ENCODE measurements at regions of chr6 and their contacts with region 1.

Region 1: DNA sequence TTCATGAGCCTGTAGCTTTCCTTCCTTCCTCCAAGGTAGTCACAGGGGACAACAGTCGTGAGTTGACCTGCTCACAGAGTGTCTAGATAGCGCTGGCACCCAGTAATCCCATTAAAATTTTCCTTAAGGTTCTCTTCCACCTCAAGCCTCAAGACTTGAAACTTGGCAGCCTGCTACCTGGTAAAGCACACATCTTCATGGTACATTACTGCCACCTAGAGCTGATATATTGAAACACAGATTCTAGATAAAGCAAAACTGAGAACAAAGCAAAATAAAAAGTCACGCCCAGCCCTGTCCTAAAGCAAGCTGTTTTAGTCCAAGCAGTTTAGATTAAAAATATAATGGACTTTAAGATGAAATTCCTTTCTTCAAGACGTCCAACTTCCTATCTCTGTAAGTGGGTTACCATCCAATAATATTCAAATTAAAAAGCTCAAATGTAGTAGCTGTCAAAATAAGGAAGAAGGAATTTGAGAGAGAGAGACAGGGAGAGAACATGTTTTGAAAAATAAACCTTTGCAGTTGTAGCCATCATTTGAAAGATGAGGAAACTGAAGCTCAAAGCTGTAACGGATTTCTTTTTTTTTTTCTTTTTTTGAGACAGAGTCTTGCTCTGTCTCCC is 50.7 kb upstream of the CD83 start:
- DNase-seq: no peak
- H3K4me3 Mint-ChIP-seq: no peak overlapping the region
- H3K27ac Mint-ChIP-seq: no peak overlapping the region
- H3K4me1 Mint-ChIP-seq: peaks cover 8% of the 10 kb centered on the region
- H3K27me3 Mint-ChIP-seq: peaks cover 21% of the 10 kb centered on the region

Region 2: GRCh38 chr6:13873285-13874190 is 193.4 kb before region 1 on chr6:
- CTCF ChIA-PET with region 1: interaction called, 20 read pairs
- DNase-seq: peak; percentile 78
- H3K4me3 Mint-ChIP-seq: peak overlapping the region; percentile 78
- H3K27ac Mint-ChIP-seq: peak overlapping the region; percentile 12
- H3K4me1 Mint-ChIP-seq: peaks cover 16% of the 10 kb centered on the region
- H3K27me3 Mint-ChIP-seq: peaks cover 31% of the 10 kb centered on the region

Region 3: DNA sequence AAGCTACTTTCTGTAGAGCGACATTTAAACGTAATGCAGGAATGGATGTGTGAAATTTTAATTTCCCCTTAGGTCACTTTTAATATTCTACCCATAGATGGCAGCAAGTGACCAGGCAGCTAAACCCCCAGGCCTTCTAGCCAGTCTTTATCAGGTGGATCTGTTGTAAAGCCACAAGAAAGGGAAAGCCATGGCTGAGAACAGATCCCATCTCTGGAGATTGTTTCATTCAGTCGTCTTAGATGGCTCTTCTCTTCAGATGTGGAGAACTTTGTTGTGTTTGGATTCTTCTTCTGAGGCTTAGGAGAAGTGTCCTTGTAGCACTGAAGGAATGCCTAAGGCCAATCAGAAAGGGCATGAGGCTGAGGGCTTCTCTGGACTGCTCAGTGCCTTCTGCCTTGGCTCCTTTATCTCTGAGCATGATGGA is 157.9 kb before region 1 on chr6:
- CTCF ChIA-PET with region 1: interaction called, 13 read pairs
- DNase-seq: peak; percentile 55
- H3K4me3 Mint-ChIP-seq: no peak overlapping the region
- H3K27ac Mint-ChIP-seq: no peak overlapping the region
- H3K4me1 Mint-ChIP-seq: peaks cover 2% of the 10 kb centered on the region
- H3K27me3 Mint-ChIP-seq: peaks cover 17% of the 10 kb centered on the region

Region 4: GRCh38 chr6:14046476-14047068 is 20.3 kb before region 1 on chr6:
- CTCF ChIA-PET with region 1: interaction called, 75 read pairs
- DNase-seq: peak; percentile 58
- H3K4me3 Mint-ChIP-seq: no peak overlapping the region
- H3K27ac Mint-ChIP-seq: no peak overlapping the region
- H3K4me1 Mint-ChIP-seq: no peaks in the 10 kb centered on the region
- H3K27me3 Mint-ChIP-seq: peaks cover 30% of the 10 kb centered on the region

Region 5: GRCh38 chr6:14144678-14145113 is 77.8 kb after region 1 on chr6:
- CTCF ChIA-PET with region 1: interaction called, 11 read pairs
- DNase-seq: peak; percentile 77
- H3K4me3 Mint-ChIP-seq: no peak overlapping the region
- H3K27ac Mint-ChIP-seq: no peak overlapping the region
- H3K4me1 Mint-ChIP-seq: no peaks in the 10 kb centered on the region
- H3K27me3 Mint-ChIP-seq: peaks cover 7% of the 10 kb centered on the region

Measured in activated naive CD4-positive, alpha-beta T cell treated with anti-CD3 and anti-CD28 coated beads, Interleukin-2, amount 10 ng/mL, durations not matched to agents 7 days and 5 days (primary cell).